ENCODE measurements at regions of chr2 and their contacts with region 1.

Region 1: GRCh38 chr2:164560181-164560792 is 61.0 kb downstream of the GRB14 start:
- DNase-seq: no peak
- H3K4me3 ChIP-seq: no peak overlapping the region
- H3K27ac ChIP-seq: no peak overlapping the region
- H3K4me1 ChIP-seq: no peaks in the 10 kb centered on the region
- H3K27me3 ChIP-seq: no peaks in the 10 kb centered on the region
- CTCF ChIP-seq: peak in 2 of 3 experiments; percentile 49 to 54; a peak in 2 of 4 replicates
- EP300 ChIP-seq: no peak
- POLR2A ChIP-seq: no peak
- RAD21 ChIP-seq: peak; percentile 38 to 39

Region 2: GRCh38 chr2:164538240-164538866 is 21.9 kb before region 1 on chr2:
- CTCF ChIA-PET with region 1: interaction called, 36 read pairs
- POLR2A ChIA-PET with region 1: no interaction called
- DNase-seq: no peak
- H3K4me3 ChIP-seq: no peak overlapping the region
- H3K27ac ChIP-seq: no peak overlapping the region
- H3K4me1 ChIP-seq: no peaks in the 10 kb centered on the region; a peak in 1 of 7 replicates
- H3K27me3 ChIP-seq: no peaks in the 10 kb centered on the region
- CTCF ChIP-seq: peak in 2 of 3 experiments; percentile 68 to 70; a peak in 3 of 4 replicates
- EP300 ChIP-seq: no peak
- POLR2A ChIP-seq: no peak
- RAD21 ChIP-seq: peak; percentile 77 to 81

Region 3: GRCh38 chr2:164574925-164575324 is 14.6 kb after region 1 on chr2:
- CTCF ChIA-PET with region 1: interaction called, 13 read pairs
- POLR2A ChIA-PET with region 1: no interaction called
- DNase-seq: no peak
- H3K4me3 ChIP-seq: no peak overlapping the region
- H3K27ac ChIP-seq: no peak overlapping the region
- H3K4me1 ChIP-seq: no peaks in the 10 kb centered on the region; a peak in 1 of 7 replicates
- H3K27me3 ChIP-seq: no peaks in the 10 kb centered on the region
- CTCF ChIP-seq: no peak
- EP300 ChIP-seq: no peak
- POLR2A ChIP-seq: no peak
- RAD21 ChIP-seq: no peak

Region 4: DNA sequence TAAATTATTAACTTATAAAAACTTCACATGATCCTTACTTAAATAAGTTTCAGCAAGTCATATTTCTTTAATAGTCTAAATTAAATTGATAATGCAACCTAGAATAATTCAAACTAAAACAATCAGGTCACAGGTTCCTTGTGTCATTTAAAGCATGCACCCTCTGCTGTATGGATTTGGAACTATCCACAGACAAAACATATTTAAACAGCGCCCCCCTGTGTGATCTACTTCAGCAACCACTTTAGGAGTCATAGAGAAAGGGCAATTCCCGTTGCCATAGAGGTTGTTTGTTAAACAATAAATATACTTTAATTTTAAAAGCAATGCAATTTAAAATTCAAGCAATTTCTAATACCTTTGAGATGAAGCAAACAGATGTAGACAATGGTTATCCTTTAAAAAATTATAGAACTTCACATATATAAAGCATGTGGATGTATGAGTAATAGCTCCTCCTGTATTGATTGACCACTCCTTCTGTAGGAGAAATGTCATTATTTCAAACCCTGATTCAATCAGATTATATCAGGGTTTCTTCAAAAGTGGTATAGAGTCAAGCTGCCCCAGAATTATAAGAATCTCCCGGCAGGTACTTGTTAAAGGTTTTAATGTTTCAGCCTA is 39.8 kb after region 1 on chr2:
- CTCF ChIA-PET with region 1: interaction called, 36 read pairs
- POLR2A ChIA-PET with region 1: no interaction called
- DNase-seq: peak in 1 of 2 experiments; percentile 52
- H3K4me3 ChIP-seq: no peak overlapping the region
- H3K27ac ChIP-seq: no peak overlapping the region
- H3K4me1 ChIP-seq: no peaks in the 10 kb centered on the region
- H3K27me3 ChIP-seq: no peaks in the 10 kb centered on the region
- CTCF ChIP-seq: peak in 2 of 3 experiments; percentile 79 to 99; a peak in 3 of 4 replicates
- EP300 ChIP-seq: no peak
- POLR2A ChIP-seq: no peak
- RAD21 ChIP-seq: peak; percentile 66 to 69

Region 5: GRCh38 chr2:164620873-164621626 is 60.8 kb after region 1 on chr2 and contains the start of gene GRB14:
- CTCF ChIA-PET with region 1: interaction called, 17 read pairs
- POLR2A ChIA-PET with region 1: no interaction called
- DNase-seq: peak; percentile 62 to 84
- H3K4me3 ChIP-seq: peak within 1 kb of the TSS; percentile 52 to 85 (median 72)
- H3K27ac ChIP-seq: peak within 1 kb of the TSS; percentile 73; the same call in 1 of the 2 replicates
- H3K4me1 ChIP-seq: peaks cover 5 to 14% (median 11%) of the 10 kb centered on the region in 4 experiments; a peak in 6 of 7 replicates
- H3K27me3 ChIP-seq: no peaks in the 10 kb centered on the region; a peak in 1 of 7 replicates
- CTCF ChIP-seq: no peak
- EP300 ChIP-seq: no peak
- POLR2A ChIP-seq: peak; percentile 68 to 83
- RAD21 ChIP-seq: no peak
- total RNA-seq, gene GRB14: 11.6 and 13.5 TPM in 2 replicates

Region 6: DNA sequence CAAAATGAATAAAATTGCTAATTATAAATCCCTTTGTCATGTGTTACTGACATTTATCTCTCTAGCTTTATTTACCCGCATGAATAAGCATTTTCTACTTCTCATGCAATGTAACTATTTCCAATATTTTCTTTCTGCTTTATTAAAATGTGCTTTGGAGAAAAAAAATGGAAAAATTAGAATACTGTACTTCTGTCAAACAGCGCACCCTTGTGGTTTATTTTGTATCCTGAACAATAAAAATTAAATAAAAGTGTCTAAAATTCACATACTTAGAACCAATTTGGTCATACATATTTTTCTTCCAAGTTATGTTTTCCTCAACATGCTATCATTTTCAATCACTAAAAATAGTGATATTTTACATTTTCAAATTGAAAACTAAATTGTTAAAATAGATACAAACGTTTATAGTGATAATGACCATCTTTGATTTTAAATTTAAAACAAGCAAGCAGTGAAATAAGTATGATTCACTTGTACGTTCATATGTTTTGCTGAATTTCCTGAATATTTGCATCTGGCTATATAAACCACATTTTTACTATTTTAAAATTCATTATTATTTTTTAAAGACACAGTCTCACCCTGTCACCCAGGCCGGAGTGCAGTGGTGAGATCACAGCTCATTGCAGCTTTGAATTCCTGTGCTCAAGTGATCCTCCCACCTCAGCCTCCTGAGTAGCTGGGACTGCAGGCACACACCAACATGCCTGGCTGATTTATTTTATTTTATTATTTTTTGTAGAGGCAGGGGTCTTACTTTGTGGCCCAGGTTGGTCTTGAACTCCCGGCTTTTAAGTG is 156.9 kb after region 1 on chr2:
- CTCF ChIA-PET with region 1: interaction called, 13 read pairs
- POLR2A ChIA-PET with region 1: no interaction called
- DNase-seq: no peak
- H3K4me3 ChIP-seq: no peak overlapping the region
- H3K27ac ChIP-seq: no peak overlapping the region
- H3K4me1 ChIP-seq: peaks cover 0 to 3% (median 0%) of the 10 kb centered on the region in 4 experiments; a peak in 1 of 7 replicates
- H3K27me3 ChIP-seq: no peaks in the 10 kb centered on the region
- CTCF ChIP-seq: peak in 2 of 3 experiments; percentile 25 to 44; a peak in 2 of 4 replicates
- EP300 ChIP-seq: no peak
- POLR2A ChIP-seq: no peak
- RAD21 ChIP-seq: peak in 1 of 2 experiments; percentile 42; a peak in 3 of 4 replicates